ENCODE measurements at regions of chr11 and their contacts with region 1.

Region 1: GRCh38 chr11:63099555-63099954 is 44.5 kb downstream of the SLC22A24 start:
- DNase-seq: no peak
- ATAC-seq: no peak
- H3K4me3 ChIP-seq: no peak overlapping the region
- H3K27ac ChIP-seq: no peak overlapping the region
- H3K4me1 ChIP-seq: no peaks in the 10 kb centered on the region
- H3K27me3 ChIP-seq: no peaks in the 10 kb centered on the region
- CTCF ChIP-seq: no peak

Region 2: DNA sequence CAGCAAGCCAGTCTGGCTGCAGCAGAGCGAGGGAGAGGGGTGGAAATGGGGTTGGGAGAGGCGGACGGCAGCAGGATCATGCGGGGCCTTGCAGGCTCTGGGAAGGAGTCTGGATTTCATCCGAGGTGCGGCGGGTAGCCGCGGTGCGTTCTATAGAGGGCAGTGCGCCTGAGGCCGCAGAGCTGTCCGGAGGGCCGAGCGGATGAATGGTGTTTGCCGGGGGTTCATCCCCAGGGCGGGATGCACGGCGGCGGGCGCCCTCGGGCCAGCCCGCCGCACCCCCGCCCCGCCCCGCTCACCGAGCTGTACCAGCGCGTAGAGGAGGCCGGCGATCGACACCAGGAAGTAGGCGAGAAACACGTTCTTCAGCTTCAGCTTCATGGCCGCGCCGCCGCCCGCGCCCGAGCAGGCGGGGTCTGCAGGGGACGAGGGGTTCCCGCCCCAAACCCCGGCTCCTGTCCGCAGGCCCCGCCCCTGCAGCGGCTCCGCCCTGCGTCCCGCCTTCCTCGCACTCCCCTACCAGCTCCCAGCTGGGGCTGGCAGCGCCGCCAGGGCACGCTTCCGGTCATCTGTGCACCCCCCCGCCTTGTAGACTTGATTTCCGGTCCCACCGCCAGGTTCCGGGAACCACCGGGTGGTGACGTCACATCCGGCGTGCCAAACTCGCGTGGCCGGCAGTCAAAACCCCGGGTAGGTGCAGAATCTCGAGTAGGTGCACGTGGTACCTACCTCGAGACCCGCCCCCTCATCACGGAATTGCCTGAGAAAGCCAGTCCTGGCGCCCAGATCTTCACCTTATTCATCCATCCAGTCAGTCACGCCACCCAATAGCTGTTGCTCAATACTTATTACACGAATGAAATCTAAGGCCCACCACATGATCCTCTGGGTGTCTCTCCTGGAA is 477.7 kb before region 1 on chr11 and contains the start of gene B3GAT3:
- intact Hi-C with region 1: no loop called
- DNase-seq: peak; percentile 98 to 100 (median 99)
- ATAC-seq: peak; percentile 99
- H3K4me3 ChIP-seq: peak within 1 kb of the TSS; percentile 59 to 82
- H3K27ac ChIP-seq: peak within 1 kb of the TSS; percentile 90 to 92
- H3K4me1 ChIP-seq: peaks cover 11 to 27% of the 10 kb centered on the region in 2 donors
- H3K27me3 ChIP-seq: no peaks in the 10 kb centered on the region
- CTCF ChIP-seq: peak in 1 of 2 donors; percentile 48
- polyA plus RNA-seq, gene B3GAT3: 19.0 to 35.6 (median 25.0) TPM

Region 3: DNA sequence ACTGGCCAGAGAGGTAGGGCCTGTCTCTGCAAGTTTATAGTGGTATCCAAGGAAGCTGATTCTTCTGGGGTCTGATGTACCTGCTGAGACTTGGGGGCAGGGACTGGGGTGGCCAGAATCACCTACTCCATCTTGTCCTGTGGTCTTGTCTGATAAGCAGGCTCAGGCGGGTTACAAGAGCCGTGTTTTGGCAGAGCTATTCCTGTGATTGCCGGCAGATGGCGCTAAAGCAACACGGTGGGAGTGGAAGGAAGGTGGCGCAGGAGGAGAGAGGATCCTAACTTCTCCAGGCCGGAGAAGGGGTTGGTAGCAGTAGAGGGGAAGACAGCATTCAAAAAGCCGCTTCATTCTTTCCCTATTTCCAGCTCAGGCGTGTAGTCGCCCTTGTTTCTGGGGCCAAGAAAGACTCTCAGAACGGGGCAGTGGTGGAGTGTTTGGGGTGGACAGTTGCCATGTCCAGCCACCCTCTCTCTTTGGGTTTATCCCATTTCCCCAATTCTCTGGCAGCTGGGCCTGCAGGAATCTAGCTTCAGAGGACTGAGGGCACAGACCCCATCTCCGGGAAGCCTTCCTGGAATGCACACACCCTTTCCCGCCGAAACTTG is 193.5 kb before region 1 on chr11:
- intact Hi-C with region 1: no loop called
- DNase-seq: peak; percentile 78 to 89 (median 83)
- ATAC-seq: peak; percentile 86
- H3K4me3 ChIP-seq: no peak overlapping the region
- H3K27ac ChIP-seq: peak overlapping the region in 1 of 2 donors; percentile 62
- H3K4me1 ChIP-seq: peaks cover 14 to 43% of the 10 kb centered on the region in 2 donors
- H3K27me3 ChIP-seq: no peaks in the 10 kb centered on the region
- CTCF ChIP-seq: peak; percentile 95 to 98

Region 4: DNA sequence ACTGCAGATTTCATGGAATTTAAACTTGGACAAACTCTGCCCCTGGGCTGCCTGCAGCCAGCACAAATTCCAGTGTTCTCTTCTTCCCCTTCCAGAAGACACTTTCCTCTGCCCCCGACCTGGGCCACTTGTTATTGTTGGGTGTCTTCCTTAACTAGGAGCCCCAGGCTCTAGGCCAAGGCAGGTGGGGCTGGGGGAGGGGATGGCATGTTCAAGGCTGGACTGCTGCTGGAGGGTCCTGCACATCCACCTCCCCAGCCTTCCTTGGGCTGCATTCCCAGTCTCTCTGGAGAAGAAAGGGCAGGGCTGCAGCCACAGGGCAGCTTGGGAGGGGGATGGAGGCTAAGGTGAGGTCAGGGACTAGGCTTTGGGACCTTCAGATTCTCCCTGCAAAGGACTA is 103.3 kb before region 1 on chr11:
- intact Hi-C with region 1: no loop called
- DNase-seq: no peak
- ATAC-seq: no peak
- H3K4me3 ChIP-seq: no peak overlapping the region
- H3K27ac ChIP-seq: no peak overlapping the region
- H3K4me1 ChIP-seq: no peaks in the 10 kb centered on the region
- H3K27me3 ChIP-seq: no peaks in the 10 kb centered on the region
- CTCF ChIP-seq: no peak

Region 5: GRCh38 chr11:63155794-63156193 is 56.2 kb after region 1 on chr11:
- intact Hi-C with region 1: loop called in 1 of 2 experiments (anchors 10 kb)
- DNase-seq: no peak
- ATAC-seq: no peak
- H3K4me3 ChIP-seq: no peak overlapping the region
- H3K27ac ChIP-seq: no peak overlapping the region
- H3K4me1 ChIP-seq: no peaks in the 10 kb centered on the region
- H3K27me3 ChIP-seq: peaks cover 0 to 8% of the 10 kb centered on the region in 2 donors
- CTCF ChIP-seq: no peak